ENCODE measurements at regions of chr1 and their contacts with region 1.

Region 1: DNA sequence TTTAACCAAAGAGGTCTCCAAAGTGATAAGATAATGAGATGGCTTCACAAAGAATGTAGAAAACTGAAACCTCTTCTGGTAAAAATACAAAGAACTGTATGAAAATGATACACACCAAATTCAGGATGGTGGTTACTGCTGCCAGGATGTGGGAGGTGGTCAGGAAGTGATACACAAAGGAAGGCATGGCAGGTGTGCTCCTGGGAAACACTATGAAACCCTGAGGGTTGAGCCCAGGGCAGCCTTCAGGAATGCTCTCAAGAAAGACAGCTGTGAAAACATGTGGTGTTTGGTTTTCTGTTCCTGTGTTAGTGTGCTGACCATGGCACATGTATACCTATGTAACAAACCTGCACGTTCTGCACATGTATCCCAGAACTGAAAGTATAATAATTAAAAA is 109.3 kb downstream of the NTNG1 start:
- DNase-seq: no peak
- H3K4me3 ChIP-seq: no peak overlapping the region
- H3K27ac ChIP-seq: peak overlapping the region; percentile 34
- H3K4me1 ChIP-seq: peaks cover 90% of the 10 kb centered on the region
- H3K27me3 ChIP-seq: no peaks in the 10 kb centered on the region
- CTCF ChIP-seq: no peak

Region 2: DNA sequence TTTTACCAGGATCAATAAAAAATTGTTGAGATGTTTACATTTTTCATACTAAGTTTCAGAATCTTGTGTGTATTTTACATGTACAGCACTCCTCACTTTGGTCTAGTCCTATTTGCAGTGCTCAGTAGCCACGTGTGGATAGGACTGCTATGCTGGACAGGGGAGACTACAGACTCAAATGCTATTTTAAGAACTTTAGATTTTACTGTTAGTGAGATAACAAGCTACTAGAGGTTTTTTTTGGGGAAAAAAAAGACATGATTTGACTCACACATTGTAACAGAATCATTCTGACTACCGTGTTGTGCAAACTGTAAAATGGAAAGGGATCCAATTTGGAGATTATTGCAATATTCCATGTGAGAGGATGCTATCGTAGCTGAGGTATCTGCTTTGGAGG is 612.6 kb before region 1 on chr1:
- CTCF ChIA-PET with region 1: no interaction called
- POLR2A ChIA-PET with region 1: no interaction called
- intact Hi-C with region 1: no loop called
- DNase-seq: no peak
- H3K4me3 ChIP-seq: no peak overlapping the region
- H3K27ac ChIP-seq: no peak overlapping the region
- H3K4me1 ChIP-seq: no peaks in the 10 kb centered on the region
- H3K27me3 ChIP-seq: no peaks in the 10 kb centered on the region
- CTCF ChIP-seq: no peak

Region 3: GRCh38 chr1:107171333-107171732 is 78.8 kb before region 1 on chr1:
- CTCF ChIA-PET with region 1: no interaction called
- POLR2A ChIA-PET with region 1: no interaction called
- intact Hi-C with region 1: loop called (anchors 5 kb)
- DNase-seq: peak; percentile 85
- H3K4me3 ChIP-seq: no peak overlapping the region
- H3K27ac ChIP-seq: peak overlapping the region; percentile 76
- H3K4me1 ChIP-seq: peaks cover 97% of the 10 kb centered on the region
- H3K27me3 ChIP-seq: no peaks in the 10 kb centered on the region
- CTCF ChIP-seq: no peak